ENCODE measurements at regions of chr1 and their contacts with region 1.

Region 1: GRCh38 chr1:20151906-20152598 is 12.9 kb downstream of the PLA2G2F start:
- DNase-seq: peak; percentile 69 to 81
- ATAC-seq: peak; percentile 92 to 98
- H3K4me3 ChIP-seq: peak overlapping the region; percentile 50
- H3K27ac ChIP-seq: peak overlapping the region; percentile 75 to 77
- H3K4me1 ChIP-seq: 0 out of 3 replicates have a peak, but pooled peaks cover 10% of the 10 kb centered on the region
- CTCF ChIP-seq: peak; percentile 78
- EP300 ChIP-seq: no peak
- POLR2A ChIP-seq: no peak
- RAD21 ChIP-seq: peak; percentile 88 to 92

Region 2: GRCh38 chr1:19918057-19918456 is 234.0 kb before region 1 on chr1:
- CTCF ChIA-PET with region 1: interaction called, 125 read pairs
- POLR2A ChIA-PET with region 1: no interaction called
- DNase-seq: peak; percentile 61 to 64
- ATAC-seq: peak; percentile 79 to 86; a peak in 5 of 6 replicates
- H3K4me3 ChIP-seq: no peak overlapping the region
- H3K27ac ChIP-seq: no peak overlapping the region
- H3K4me1 ChIP-seq: no peaks in the 10 kb centered on the region
- CTCF ChIP-seq: peak; percentile 75
- EP300 ChIP-seq: no peak
- POLR2A ChIP-seq: no peak
- RAD21 ChIP-seq: peak; percentile 88 to 89

Region 3: DNA sequence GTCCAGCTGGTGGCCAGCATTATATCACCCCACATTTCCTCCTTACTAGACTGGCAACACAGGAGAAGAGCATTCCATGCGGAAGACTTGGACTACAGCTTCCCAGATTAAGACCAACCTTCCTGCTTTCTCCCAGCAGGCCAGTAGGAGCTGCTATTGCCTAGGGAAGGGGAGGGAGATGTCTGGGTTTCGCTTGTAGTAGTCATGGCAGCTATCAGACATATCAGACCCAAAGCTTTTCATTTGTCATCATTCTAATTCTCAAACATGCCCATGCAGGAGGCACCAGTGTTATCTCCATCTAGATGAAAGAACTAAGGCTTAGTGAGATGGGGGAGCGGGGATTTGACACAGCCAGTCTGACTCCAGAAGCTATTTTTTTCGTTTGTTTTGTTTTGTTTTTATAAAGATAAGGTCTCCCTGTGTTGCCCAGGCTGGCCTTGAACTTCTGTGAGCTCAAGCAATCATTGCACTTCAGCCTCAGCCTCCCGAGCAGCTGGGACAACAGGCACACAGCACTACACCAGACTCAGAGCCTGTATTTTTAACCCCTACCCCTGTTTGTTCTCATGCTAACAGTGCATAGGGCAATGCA is 177.1 kb before region 1 on chr1:
- CTCF ChIA-PET with region 1: interaction called, 16 read pairs
- POLR2A ChIA-PET with region 1: no interaction called
- DNase-seq: peak; percentile 55 to 67
- ATAC-seq: peak; percentile 88 to 95
- H3K4me3 ChIP-seq: no peak overlapping the region
- H3K27ac ChIP-seq: no peak overlapping the region
- H3K4me1 ChIP-seq: no peaks in the 10 kb centered on the region
- CTCF ChIP-seq: peak; percentile 57
- EP300 ChIP-seq: no peak
- POLR2A ChIP-seq: no peak
- RAD21 ChIP-seq: peak; percentile 66 to 81

Region 4: GRCh38 chr1:20100632-20101355 is 51.3 kb before region 1 on chr1:
- CTCF ChIA-PET with region 1: interaction called, 54 read pairs
- POLR2A ChIA-PET with region 1: no interaction called
- DNase-seq: peak; percentile 34 to 42
- ATAC-seq: peak; percentile 90 to 94
- H3K4me3 ChIP-seq: no peak overlapping the region
- H3K27ac ChIP-seq: no peak overlapping the region
- H3K4me1 ChIP-seq: no peaks in the 10 kb centered on the region
- CTCF ChIP-seq: peak; percentile 48
- EP300 ChIP-seq: no peak
- POLR2A ChIP-seq: no peak
- RAD21 ChIP-seq: peak; percentile 65 to 71

Region 5: DNA sequence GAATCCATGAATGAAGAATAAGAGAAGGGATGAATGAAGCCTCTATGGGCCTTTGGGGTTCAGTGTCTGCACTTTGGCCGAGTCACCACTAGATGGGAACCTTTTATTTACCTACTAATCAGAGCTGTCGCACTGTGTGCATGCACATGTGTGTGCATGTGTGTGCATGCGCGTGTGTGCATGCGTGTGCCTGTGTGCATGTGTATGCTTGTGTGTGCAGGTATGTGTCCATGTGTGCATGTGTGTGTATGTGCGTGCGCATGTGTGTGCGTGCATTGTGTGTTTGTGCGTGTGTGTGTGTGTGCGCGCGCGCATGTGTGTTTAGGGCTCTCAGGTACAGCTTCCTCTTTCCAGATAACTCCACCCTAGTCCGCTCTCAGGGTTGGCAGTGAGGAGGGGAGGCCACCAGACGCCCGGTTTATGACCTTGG is 13.5 kb after region 1 on chr1:
- CTCF ChIA-PET with region 1: interaction called, 16 read pairs
- POLR2A ChIA-PET with region 1: no interaction called
- DNase-seq: peak; percentile 16 to 28
- ATAC-seq: peak; percentile 56 to 79; a peak in 4 of 6 replicates
- H3K4me3 ChIP-seq: no peak overlapping the region
- H3K27ac ChIP-seq: no peak overlapping the region
- H3K4me1 ChIP-seq: no peaks in the 10 kb centered on the region
- CTCF ChIP-seq: peak; percentile 21; the same call in 1 of the 3 replicates
- EP300 ChIP-seq: no peak
- POLR2A ChIP-seq: no peak
- RAD21 ChIP-seq: peak in 1 of 2 experiments; percentile 28; a peak in 1 of 5 replicates